Lower lobe of right lung (tissue), 2 donors: ENCODE measurements at regions of chr12 and their contacts with region 1.

Region 1: GRCh38 chr12:123242116-123242904 is 9.1 kb downstream of the MTRFR start:
- DNase-seq: no peak
- ATAC-seq: peak in 1 of 2 donors; percentile 20
- H3K4me3 ChIP-seq: no peak overlapping the region
- H3K27ac ChIP-seq: peak overlapping the region; percentile 18
- H3K4me1 ChIP-seq: peaks cover 23% of the 10 kb centered on the region
- H3K27me3 ChIP-seq: no peaks in the 10 kb centered on the region
- CTCF ChIP-seq: no peak

Region 2: DNA sequence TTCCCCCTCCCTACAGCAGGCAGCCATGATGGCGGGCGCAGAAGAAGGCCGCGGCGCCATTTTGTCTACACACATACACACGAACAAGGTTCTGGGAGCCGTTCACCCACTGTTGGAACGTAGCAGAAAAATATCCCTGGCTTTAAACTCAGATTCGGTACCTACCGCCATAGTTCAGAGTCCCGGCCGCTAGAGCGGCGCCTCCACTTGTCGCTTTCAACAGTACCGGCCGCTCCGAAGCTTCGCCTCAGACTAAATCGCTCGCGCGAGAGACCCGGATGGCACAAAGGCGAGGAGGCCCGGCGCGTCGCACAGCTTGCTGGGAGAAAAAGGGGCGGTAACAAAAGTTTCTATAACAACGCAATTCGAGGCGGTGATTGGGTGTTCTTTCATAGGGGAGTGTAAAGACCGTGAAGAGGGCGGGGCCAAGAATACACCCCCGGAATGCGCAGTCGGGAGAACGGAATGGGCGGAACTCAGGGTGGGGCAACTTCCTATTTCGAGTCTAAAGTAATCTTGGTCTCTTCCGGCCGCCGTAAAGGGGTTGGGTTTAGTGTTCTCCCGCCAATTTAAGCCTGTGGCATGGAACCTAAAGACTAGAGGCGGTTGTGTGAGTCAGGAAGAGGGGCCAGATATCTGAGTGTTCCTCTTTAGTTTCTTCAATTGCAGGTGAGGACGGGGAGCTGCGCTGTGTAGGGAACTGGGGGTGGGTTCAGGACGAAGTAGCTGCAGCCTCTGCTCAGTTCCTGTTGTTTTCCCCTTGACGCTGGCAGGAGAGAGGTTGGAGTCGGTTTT is 715.4 kb before region 1 on chr12 and contains the starts of genes KNTC1 and RSRC2:
- intact Hi-C with region 1: no loop called
- DNase-seq: peak; percentile 97
- ATAC-seq: peak; percentile 97 to 99
- H3K4me3 ChIP-seq: peak within 1 kb of the TSS; percentile 72
- H3K27ac ChIP-seq: peak within 1 kb of the TSS; percentile 97
- H3K4me1 ChIP-seq: peaks cover 43% of the 10 kb centered on the region
- H3K27me3 ChIP-seq: no peaks in the 10 kb centered on the region
- CTCF ChIP-seq: no peak
- total RNA-seq, gene KNTC1: 8.7 TPM
- total RNA-seq, gene RSRC2: 59.1 TPM

Region 3: DNA sequence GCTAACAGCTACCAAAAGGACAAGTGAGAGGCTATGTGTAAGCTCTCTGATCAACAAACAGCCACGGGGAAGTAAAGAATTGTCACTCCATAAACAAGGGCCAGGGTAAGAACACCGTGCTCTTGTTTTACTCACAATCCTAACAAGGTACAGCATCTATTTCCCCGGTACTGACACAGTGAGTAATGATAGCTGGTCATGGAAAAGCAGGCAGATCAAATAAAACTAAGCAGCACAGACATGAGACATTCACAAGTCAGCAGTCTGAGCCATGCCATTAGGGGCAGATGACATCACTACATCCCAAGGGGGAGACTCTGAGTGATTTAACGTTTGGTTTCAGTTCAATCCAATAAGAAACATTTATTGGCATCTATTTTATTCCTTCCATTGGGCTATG is 207.4 kb before region 1 on chr12:
- intact Hi-C with region 1: loop called (anchors 10 kb)
- DNase-seq: no peak
- ATAC-seq: no peak
- H3K4me3 ChIP-seq: no peak overlapping the region
- H3K27ac ChIP-seq: no peak overlapping the region
- H3K4me1 ChIP-seq: peaks cover 14% of the 10 kb centered on the region
- H3K27me3 ChIP-seq: no peaks in the 10 kb centered on the region
- CTCF ChIP-seq: no peak

Region 4: GRCh38 chr12:123457980-123458783 is 215.9 kb after region 1 on chr12 and contains the start of gene SNRNP35:
- intact Hi-C with region 1: no loop called
- DNase-seq: peak; percentile 85
- ATAC-seq: peak; percentile 89 to 93
- H3K4me3 ChIP-seq: peak within 1 kb of the TSS; percentile 82
- H3K27ac ChIP-seq: peak within 1 kb of the TSS; percentile 100
- H3K4me1 ChIP-seq: peaks cover 23% of the 10 kb centered on the region
- H3K27me3 ChIP-seq: no peaks in the 10 kb centered on the region
- CTCF ChIP-seq: no peak
- total RNA-seq, gene SNRNP35: 23.3 TPM

Region 5: DNA sequence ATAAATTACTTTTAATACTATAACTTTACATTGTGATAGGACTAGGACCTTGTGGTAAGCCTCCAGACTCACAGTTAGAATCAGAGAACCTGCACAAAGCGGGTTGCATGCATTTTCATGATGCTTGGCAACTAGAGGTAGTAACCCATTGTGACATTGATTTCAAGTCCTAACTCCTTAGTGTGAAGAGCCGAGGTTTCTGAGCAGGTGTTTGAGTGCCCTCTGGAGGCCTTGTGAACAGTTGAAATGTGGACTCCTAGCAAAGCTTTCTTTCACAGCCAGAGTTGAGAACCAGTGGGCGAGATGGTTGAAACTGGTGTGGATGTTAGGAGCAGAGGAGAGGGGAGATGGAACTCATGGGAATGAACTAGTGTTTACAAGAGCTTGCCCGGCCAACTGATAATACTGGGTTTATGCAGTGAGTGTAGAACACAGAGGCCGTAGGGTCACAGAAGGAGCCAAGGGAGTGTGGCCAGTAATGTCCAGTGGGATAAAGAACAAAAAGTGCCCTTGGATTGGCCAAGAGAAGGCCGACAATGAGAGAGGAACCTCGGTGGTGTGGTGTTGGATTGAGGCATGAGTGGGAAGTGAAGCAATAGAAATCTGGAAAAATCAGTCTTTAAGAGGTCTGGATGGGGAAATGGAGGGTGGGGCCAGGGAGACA is 741.6 kb after region 1 on chr12:
- intact Hi-C with region 1: no loop called
- DNase-seq: no peak
- ATAC-seq: peak; percentile 85 to 87
- H3K4me3 ChIP-seq: no peak overlapping the region
- H3K27ac ChIP-seq: peak overlapping the region; percentile 13
- H3K4me1 ChIP-seq: peaks cover 34% of the 10 kb centered on the region
- H3K27me3 ChIP-seq: no peaks in the 10 kb centered on the region
- CTCF ChIP-seq: peak; percentile 67